Activated T-helper 1 cell treated with anti-CD3 and anti-CD28 coated beads, Interleukin-12 subunit alpha, Interleukin-12 subunit beta, Interleukin-2, Interleukin-4 antibody, amounts not matched to agents 30 ng/mL and 10 ng/mL and 1 ng/mL, durations not matched to agents 14 hours and 24 hours and 36 hours (primary cell): ENCODE measurements at regions of chr18 and their contacts with region 1.

Region 1: DNA sequence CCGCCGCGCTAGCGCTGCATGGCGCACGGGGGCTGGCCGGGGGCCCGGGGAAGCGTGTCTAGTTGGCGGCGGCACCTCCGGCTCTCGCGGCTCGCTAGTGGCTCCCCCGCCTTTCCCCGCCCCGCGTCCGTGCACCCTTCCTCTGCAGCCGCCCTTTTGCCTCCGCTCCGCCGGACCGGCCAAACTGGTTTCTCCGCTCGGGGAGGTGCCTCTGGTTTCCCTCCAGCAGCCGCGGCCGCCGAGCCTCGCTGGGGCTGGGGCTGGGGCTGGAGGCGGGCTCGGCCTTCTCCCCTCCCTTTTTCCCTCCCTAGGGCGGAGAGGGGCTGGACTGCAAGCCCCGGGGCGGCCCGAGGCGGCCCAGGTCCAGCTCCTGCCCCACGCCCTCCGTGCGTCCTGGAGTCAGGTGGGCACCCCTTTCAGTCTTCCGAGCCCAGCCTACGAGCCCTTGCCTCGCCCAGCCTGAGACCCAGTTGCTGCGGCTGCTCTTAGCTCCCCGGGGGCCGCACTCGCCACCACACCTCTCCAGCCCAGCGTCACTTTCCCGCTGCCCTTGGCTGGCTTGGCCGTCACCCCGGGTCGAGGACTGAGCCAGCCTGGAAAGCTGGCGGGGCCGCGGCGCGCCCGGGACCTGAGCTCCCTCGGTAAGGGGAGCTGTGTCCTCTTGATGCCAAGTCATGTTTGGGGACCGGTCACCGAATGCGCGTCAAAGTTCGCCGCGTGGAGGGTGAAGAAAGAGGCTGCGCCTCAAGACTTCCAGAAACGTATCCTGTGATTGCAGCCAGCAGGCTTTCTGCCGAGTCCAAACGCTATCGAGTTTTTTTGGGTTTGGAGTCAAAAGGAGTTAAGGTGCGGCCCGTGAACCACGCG is at the start of gene ATP8B1:
- DNase-seq: no peak
- H3K4me3 Mint-ChIP-seq: peak within 1 kb of the TSS; percentile 72
- H3K27ac Mint-ChIP-seq: peak within 1 kb of the TSS; percentile 61
- H3K4me1 Mint-ChIP-seq: peaks cover 11% of the 10 kb centered on the region
- H3K27me3 Mint-ChIP-seq: peaks cover 67% of the 10 kb centered on the region
- total RNA-seq, gene ATP8B1: 0.05 and 0.16 TPM in 2 replicates

Region 2: GRCh38 chr18:57434536-57435494 is 368.5 kb before region 1 on chr18 and contains the start of gene ONECUT2:
- intact Hi-C with region 1: loop called (anchors 5 kb)
- DNase-seq: peak; percentile 23
- H3K4me3 Mint-ChIP-seq: no peak within 1 kb of the TSS
- H3K27ac Mint-ChIP-seq: peak within 1 kb of the TSS; percentile 63
- H3K4me1 Mint-ChIP-seq: peaks cover 9% of the 10 kb centered on the region
- H3K27me3 Mint-ChIP-seq: peaks cover 82% of the 10 kb centered on the region
- total RNA-seq, gene ONECUT2: under 0.01 TPM in 1 of 2 replicates, not detected in the other

Region 3: DNA sequence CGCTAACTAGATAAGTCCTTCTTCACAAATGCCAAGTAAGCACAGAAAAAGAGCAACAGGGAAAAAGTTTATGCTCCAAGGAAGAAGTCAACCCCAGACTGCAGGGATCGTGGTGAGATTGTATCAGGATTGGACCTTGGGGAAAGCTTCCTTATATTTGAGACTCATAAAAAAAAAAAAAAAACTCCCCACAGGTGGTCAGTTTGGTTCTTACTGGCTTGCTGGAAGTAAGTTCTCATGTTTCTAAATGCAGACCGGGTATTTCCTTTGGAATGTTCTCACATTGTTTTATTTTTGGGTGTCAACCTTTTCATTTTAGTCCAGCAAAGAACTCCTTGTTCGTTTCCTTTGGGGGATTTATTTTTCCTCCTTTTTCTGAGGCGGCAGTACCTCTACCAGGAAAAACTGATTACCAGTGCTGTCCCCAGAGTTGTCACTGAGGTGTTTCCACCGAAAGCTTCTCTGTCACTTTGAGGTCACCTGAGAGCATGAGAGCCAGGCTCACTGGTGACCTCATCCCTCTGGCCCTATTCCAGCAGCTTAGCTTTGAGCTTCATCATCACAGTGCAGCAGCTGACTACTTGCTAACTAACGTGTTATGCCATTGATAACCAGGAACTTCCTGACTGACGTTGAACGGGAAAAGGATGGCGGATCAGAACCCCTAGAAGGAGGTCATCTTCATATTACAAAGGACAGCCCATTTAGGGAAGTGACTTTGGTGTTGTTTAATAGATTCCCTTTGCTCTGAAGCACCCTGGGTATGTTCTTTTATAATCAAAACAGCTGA is 16.5 kb after region 1 on chr18:
- intact Hi-C with region 1: no loop called
- DNase-seq: no peak
- H3K4me3 Mint-ChIP-seq: no peak overlapping the region
- H3K27ac Mint-ChIP-seq: no peak overlapping the region
- H3K4me1 Mint-ChIP-seq: no peaks in the 10 kb centered on the region
- H3K27me3 Mint-ChIP-seq: peaks cover 10% of the 10 kb centered on the region

Region 4: GRCh38 chr18:57841568-57841967 is 38.2 kb after region 1 on chr18:
- intact Hi-C with region 1: loop called (anchors 2 kb)
- DNase-seq: peak; percentile 3
- H3K4me3 Mint-ChIP-seq: peak overlapping the region; percentile 24
- H3K27ac Mint-ChIP-seq: peak overlapping the region; percentile 55
- H3K4me1 Mint-ChIP-seq: peaks cover 30% of the 10 kb centered on the region
- H3K27me3 Mint-ChIP-seq: peaks cover 31% of the 10 kb centered on the region

Region 5: GRCh38 chr18:57859314-57859713 is 56.0 kb after region 1 on chr18:
- intact Hi-C with region 1: loop called (anchors 5 kb)
- DNase-seq: no peak
- H3K4me3 Mint-ChIP-seq: no peak overlapping the region
- H3K27ac Mint-ChIP-seq: no peak overlapping the region
- H3K4me1 Mint-ChIP-seq: no peaks in the 10 kb centered on the region
- H3K27me3 Mint-ChIP-seq: peaks cover 15% of the 10 kb centered on the region